H1 (cell line): ENCODE measurements at regions of chr6 and their contacts with region 1.

Region 1: GRCh38 chr6:14863902-14864850 is 381.7 kb upstream of the JARID2 start:
- DNase-seq: no peak
- H3K4me3 ChIP-seq: no peak overlapping the region
- H3K27ac ChIP-seq: no peak overlapping the region
- H3K4me1 ChIP-seq: peaks cover 0 to 15% (median 9%) of the 10 kb centered on the region in 4 experiments; a peak in 6 of 7 replicates
- H3K27me3 ChIP-seq: no peaks in the 10 kb centered on the region
- CTCF ChIP-seq: peak; percentile 14 to 66 (median 33); a peak in 3 of 4 replicates
- EP300 ChIP-seq: no peak
- POLR2A ChIP-seq: no peak
- RAD21 ChIP-seq: peak; percentile 52 to 57

Region 2: GRCh38 chr6:14601490-14601889 is 262.7 kb before region 1 on chr6:
- CTCF ChIA-PET with region 1: no interaction called
- POLR2A ChIA-PET with region 1: no interaction called
- DNase-seq: peak in 1 of 2 experiments; percentile 33
- H3K4me3 ChIP-seq: no peak overlapping the region
- H3K27ac ChIP-seq: no peak overlapping the region
- H3K4me1 ChIP-seq: peaks cover 0 to 16% (median 7%) of the 10 kb centered on the region in 4 experiments; a peak in 4 of 7 replicates
- H3K27me3 ChIP-seq: peaks cover 0 to 2% (median 0%) of the 10 kb centered on the region in 4 experiments; a peak in 1 of 7 replicates
- CTCF ChIP-seq: no peak
- EP300 ChIP-seq: no peak
- POLR2A ChIP-seq: no peak
- RAD21 ChIP-seq: no peak

Region 3: DNA sequence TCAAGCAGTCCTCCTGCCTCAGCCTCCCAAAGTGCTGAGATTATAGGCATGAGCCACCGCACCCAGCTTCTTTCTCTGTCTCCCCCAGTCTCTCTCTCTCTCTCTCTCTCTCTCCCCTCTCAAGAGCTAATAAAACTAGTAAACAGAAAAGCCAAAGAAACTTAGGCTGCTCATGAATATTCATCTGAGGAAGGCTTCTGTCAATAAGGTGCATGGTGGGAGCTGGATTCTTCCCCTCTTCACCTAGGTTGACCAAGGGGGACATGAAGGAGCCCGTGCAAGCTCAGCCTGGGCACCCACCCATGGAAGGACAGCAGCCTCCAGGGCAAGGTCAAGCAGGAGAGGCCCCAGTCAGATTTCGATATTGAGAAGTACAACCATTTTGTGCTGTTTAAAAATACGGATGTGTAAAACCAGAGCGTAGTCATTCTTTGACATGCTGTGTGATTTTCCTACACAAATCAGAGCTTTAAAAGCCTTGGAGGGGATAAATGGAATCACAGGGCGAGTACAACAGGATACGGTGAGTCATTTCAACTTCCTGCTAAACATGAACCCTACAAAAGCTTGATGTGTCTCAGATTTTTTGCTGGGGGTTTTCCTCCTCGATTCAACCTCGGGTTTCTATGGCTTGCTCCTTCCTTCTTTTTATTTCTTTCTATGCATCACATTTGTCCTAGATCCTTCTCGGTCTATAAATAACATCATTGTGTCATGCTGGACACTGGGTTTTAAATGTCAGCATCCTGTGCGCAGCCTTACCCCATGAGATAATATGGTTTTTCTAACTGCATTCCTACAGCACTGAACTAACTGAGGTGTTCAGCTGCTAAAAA is 12.8 kb after region 1 on chr6:
- CTCF ChIA-PET with region 1: interaction called, 12 read pairs
- POLR2A ChIA-PET with region 1: interaction called, 3 read pairs
- DNase-seq: no peak
- H3K4me3 ChIP-seq: no peak overlapping the region
- H3K27ac ChIP-seq: no peak overlapping the region
- H3K4me1 ChIP-seq: peaks cover 0 to 14% (median 5%) of the 10 kb centered on the region in 4 experiments; a peak in 6 of 7 replicates
- H3K27me3 ChIP-seq: no peaks in the 10 kb centered on the region
- CTCF ChIP-seq: no peak
- EP300 ChIP-seq: no peak
- POLR2A ChIP-seq: no peak
- RAD21 ChIP-seq: no peak